ENCODE measurements at regions of chr18 and their contacts with region 1.

Region 1: DNA sequence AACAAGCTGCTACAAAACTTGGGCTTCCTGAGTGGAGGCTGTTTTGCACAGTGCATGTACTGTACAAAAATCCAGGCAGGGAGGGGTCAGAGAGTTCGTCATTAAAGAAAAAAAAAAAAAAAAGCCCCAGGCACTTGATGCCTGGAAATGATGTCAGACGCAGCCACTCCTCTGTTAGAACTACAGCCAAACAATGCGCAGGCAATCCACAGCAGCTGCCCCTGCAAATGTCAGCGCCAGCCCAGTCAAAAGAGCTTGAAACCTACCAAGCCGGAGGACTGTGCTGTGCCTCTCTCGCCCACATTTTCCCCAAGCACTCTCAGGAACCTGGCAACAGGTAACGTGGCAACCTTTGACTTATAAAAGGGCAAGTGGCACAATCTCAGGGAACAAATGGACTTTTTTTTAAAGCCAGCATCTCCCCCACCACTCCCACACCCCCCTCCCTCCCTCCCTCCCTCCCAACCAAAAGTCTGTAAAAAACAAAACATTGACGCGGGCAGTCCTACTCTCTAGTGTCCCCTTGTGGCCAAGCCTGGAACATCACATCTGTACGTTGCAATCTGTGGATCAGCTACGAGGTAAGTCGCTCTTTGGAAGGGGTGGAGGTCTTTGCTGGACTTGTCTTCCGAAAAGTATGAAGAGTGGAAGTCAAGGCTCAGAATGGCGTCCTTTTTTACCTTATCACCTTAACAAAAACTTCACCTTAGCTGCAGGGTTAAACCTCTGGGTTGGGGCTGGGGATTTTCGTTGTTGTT is 144.1 kb downstream of the TGIF1 start:
- DNase-seq: peak; percentile 72 to 94 (median 85)
- H3K4me3 ChIP-seq: peak overlapping the region; percentile 23 to 73 (median 59)
- H3K27ac ChIP-seq: peak overlapping the region; percentile 81 to 99 (median 97)
- H3K27me3 ChIP-seq: no peaks in the 10 kb centered on the region
- CTCF ChIP-seq: peak; percentile 62 to 91 (median 83)

Region 2: DNA sequence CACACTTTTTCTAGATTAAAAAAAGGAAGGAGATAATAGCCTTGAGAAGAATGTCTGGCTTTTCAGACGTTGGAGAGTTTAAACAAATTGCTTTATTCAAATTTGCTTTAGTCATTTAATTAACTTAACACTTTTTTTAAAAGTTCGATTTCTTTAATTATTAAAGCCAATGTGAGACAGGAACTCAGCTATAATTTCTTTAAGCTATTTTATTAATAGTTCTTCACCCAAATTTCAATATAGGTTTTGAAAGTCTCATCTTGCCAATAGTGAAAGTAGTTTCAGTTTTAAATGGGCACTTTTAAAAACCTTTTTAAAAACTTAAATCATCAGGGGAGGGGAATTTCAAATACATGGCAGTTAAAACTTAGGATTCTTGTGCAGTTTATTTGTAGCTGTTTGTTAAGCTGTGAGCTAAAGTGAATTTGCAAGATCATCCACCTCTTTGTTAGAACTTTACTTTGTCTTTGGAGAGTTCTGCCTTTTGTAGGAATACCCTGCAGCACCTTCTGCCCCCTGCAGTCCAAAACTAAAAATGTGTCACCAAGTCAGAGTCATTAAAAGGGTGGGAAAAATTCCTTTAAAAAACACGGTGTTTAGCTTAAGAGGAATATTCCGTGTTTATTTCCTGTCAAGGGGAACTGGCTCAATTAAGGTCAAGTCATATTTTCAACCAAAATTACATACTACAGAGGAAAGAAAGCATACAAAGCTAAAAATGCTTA is 139.6 kb before region 1 on chr18:
- intact Hi-C with region 1: loop called (anchors 2 kb)
- DNase-seq: no peak
- H3K4me3 ChIP-seq: peak overlapping the region in 55 of 59 donors; percentile 0 to 87 (median 40)
- H3K27ac ChIP-seq: peak overlapping the region in 56 of 59 donors; percentile 7 to 99 (median 96)
- H3K27me3 ChIP-seq: peaks cover 0 to 36% (median 4%) of the 10 kb centered on the region in 45 donors
- CTCF ChIP-seq: peak; percentile 43 to 80 (median 67)

Region 3: GRCh38 chr18:3525870-3526420 is 68.1 kb before region 1 on chr18:
- intact Hi-C with region 1: loop called (anchors 2 to 5 kb)
- DNase-seq: peak in 9 of 10 donors; percentile 47 to 70 (median 63)
- H3K4me3 ChIP-seq: peak overlapping the region in 54 of 59 donors; percentile 0 to 66 (median 40)
- H3K27ac ChIP-seq: peak overlapping the region in 58 of 59 donors; percentile 14 to 93 (median 74)
- H3K27me3 ChIP-seq: no peaks in the 10 kb centered on the region
- CTCF ChIP-seq: peak in 8 of 56 donors; percentile 8 to 17 (median 13)

Region 4: DNA sequence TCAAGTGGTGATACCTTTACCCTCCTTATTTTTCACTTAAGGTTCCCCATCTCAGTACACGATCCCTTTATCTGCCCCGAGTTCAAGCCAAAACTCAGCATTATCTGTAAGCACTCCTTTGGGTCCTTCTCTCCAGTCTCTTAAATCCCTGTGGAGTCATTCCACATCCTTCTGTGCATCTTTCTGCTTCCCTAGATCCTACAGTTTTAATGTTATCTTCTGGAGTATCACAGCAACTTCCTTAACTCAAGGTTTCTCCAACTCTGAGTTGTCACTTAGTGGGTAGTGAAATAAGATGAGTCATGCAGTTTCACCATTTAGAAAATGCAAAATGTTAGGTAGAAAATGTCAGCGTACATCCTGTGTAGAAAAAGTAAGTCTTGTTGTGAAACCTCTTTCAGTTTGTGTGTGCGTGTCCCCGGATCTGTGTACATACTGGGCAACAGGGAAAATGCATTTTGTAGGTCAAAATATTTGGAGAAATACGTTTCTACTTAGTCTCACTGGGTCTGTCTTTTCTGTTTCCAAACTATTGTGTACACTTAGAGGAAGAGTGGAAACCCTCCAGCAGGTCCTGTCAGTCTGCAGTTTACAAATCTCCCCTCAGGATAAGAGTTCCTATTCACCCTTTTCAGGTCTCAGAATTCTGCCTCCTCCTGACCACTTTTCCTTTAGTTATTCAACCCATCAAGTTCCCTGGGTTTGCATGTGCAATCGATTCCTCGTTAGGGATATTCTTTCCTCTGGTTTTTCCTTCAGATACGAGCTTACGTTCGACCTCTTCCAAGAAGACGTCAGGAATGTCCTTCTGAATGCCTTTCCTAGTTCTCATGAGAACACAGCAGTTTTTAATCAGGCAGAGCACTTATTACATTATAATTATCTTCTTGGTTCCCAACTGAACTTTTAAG is 10.7 kb after region 1 on chr18:
- intact Hi-C with region 1: loop called in 1 of 2 experiments (anchors 1 kb)
- DNase-seq: no peak
- H3K4me3 ChIP-seq: peak overlapping the region in 56 of 59 donors; percentile 0 to 72 (median 50)
- H3K27ac ChIP-seq: peak overlapping the region; percentile 36 to 98 (median 92)
- H3K27me3 ChIP-seq: no peaks in the 10 kb centered on the region
- CTCF ChIP-seq: peak in 1 of 56 donors; percentile 4

Region 5: DNA sequence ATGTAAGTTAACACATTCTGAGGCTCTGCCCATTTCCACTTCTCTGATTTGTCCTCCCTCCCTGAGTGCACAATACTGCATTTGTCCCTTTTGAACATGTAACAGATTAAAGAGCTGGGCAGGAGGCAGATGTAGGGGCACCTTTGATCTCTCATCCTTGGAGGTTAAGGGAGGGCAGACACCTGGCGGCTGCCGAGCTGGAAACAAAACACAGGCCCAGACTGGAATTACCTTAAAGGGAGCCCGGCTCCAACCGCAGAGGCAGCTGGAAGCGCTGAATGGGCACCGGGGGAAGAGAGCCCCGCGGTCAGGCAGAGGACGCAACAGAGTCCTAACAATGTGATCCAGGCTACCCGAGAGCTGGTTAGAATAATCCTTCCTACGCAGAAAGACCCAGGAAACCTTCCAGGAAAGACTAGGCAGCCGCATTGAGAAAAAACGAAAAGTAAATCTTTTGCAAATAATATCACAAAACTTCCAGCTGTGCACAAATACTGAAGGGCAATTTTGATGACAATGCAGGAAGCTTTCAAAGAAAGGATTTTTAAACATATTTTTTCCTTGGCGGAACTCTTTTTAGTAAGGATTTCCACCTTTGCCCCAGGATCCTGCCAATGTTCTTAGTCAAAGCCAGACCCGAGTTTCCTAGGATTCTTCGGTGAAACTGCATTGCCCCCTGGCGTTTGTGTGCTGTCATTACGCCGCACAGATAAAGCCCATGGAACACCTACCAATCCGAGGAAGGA is 71.9 kb after region 1 on chr18:
- intact Hi-C with region 1: loop called in 1 of 2 experiments (anchors 2 kb)
- DNase-seq: peak; percentile 76 to 89 (median 83)
- H3K4me3 ChIP-seq: peak overlapping the region in 57 of 59 donors; percentile 6 to 67 (median 42)
- H3K27ac ChIP-seq: peak overlapping the region in 47 of 59 donors; percentile 5 to 83 (median 55)
- H3K27me3 ChIP-seq: no peaks in the 10 kb centered on the region
- CTCF ChIP-seq: peak; percentile 90 to 99 (median 97)

Region 6: DNA sequence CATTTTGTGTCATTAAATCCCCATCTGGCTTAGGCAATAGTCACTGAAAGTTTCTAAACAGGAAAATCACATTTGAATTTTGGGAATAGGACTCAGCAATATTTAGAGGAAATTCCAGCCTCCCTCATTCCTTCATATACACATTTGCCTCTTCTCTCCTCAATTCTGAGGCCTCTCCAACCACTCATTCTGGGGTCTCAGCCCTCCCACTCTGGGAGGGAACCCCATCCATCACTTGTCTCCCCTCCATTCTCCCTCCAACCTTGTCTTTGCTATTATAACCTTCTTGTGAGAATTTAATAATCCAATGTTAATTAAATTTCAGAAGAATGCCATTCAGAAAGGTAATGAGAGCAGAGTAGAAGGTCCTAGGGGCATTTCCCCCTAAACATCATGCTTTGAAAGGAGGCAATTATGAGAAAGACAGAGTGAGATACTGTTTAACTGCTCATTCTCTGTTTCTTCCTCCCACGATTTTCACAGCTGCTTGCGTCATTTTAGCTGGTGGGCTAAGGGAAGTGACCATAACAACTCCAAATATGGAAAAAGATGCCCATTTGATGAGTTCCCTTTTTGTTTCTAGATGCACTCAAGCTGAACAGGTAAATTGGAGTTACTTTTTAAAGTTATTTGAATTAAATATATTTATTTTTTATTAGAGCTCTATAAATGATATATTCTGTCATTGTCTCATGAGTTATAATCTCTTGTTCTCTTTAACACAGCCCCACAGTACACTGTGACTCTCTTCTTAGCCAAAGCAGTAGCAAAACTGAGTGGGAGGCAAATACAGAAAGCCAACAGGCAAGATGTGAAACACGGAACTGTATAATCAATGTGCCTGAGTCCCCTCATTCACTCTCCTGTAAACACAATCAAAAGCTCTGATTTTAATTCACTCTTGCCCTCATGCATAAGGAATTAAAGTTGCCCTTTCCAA is 725.9 kb after region 1 on chr18:
- intact Hi-C with region 1: no loop called
- DNase-seq: no peak
- H3K4me3 ChIP-seq: no peak overlapping the region
- H3K27ac ChIP-seq: peak overlapping the region in 7 of 59 donors; percentile 4 to 51 (median 23)
- H3K27me3 ChIP-seq: no peaks in the 10 kb centered on the region
- CTCF ChIP-seq: no peak